BJ (cell line): ENCODE measurements at regions of chr11 and their contacts with region 1.

Region 1: DNA sequence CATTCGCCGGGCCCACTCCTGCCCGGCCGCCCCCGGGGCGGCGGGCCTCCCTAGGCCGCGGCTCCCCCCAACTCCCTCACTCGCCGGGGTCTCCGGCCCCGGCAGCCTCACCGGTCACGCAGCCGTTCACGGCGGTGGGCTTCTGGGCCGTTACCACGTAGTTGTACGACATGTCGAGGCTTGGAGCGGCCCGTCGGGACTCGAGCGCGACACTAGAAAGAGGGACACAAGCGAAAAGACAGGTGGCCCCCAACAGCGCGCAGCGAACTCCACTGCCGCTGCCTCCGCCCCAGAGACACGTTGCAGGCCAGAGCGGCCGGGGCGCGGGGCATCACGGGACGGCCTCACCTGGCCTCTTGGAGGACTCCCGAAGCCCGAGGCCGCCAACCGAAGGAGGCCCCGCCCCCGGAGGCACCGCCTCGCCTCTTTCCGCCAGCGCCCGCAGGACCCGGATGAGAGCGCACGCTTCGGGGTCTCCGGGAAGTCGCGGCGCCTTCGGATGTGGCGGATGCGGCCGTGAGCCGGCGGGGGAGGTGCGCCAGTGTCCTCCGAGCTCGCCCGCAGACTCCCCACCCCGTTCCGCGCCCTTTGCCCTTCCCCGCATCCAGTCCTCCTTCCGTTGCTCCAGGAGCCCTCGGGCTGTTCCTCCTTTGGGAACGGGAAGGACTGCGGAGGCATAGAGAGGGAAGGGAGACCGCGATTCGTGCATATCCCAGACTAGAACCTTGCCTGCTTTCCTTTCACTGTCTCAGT is at the starts of genes DDB1 and TKFC:
- DNase-seq: peak; percentile 53
- H3K4me3 ChIP-seq: peak within 1 kb of the TSS; percentile 95
- H3K27me3 ChIP-seq: no peaks in the 10 kb centered on the region
- CTCF ChIP-seq: no peak
- polyA plus RNA-seq, gene DDB1: 265 and 281 TPM in 2 replicates
- polyA plus RNA-seq, gene TKFC: 23.9 and 37.6 TPM in 2 replicates

Region 2: DNA sequence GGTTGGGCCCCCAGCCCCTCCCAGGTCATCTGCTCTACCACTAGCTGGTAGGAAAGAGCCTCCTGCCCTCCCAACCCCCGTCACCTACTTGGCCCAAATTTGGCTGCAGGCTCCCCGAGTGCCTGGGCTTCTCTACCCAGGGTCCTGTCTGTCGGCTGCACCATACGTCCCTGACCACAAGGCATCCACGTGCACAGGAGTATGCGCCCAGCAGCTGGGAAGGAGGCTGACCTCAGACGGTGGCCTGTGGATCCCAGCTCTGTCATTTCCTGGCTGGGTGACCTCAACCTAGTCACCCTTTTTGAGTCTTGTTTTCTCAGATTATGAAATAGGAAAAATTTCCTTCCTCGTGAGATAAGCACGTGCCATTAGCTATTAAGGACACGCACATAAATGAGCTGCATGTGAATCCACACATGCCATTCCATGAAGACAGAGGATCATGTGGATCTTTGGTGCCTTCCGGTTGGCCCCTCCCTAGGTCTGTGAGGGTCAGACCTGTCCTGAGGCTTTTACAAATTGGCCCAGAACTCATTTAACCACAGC is 15.0 kb after region 1 on chr11:
- CTCF ChIA-PET with region 1: interaction called, 56 read pairs
- POLR2A ChIA-PET with region 1: no interaction called
- DNase-seq: no peak
- H3K4me3 ChIP-seq: no peak overlapping the region
- H3K27me3 ChIP-seq: no peaks in the 10 kb centered on the region
- CTCF ChIP-seq: no peak

Region 3: GRCh38 chr11:61361686-61362541 is 28.9 kb after region 1 on chr11 and contains the starts of genes CYB561A3 and TMEM138:
- CTCF ChIA-PET with region 1: interaction called, 60 read pairs
- POLR2A ChIA-PET with region 1: no interaction called
- DNase-seq: peak; percentile 73
- H3K4me3 ChIP-seq: peak within 1 kb of the TSS; percentile 77
- H3K27me3 ChIP-seq: no peaks in the 10 kb centered on the region
- CTCF ChIP-seq: no peak
- polyA plus RNA-seq, gene CYB561A3: 32.9 and 91.3 TPM in 2 replicates
- polyA plus RNA-seq, gene TMEM138: 55.6 and 73.9 TPM in 2 replicates

Region 4: DNA sequence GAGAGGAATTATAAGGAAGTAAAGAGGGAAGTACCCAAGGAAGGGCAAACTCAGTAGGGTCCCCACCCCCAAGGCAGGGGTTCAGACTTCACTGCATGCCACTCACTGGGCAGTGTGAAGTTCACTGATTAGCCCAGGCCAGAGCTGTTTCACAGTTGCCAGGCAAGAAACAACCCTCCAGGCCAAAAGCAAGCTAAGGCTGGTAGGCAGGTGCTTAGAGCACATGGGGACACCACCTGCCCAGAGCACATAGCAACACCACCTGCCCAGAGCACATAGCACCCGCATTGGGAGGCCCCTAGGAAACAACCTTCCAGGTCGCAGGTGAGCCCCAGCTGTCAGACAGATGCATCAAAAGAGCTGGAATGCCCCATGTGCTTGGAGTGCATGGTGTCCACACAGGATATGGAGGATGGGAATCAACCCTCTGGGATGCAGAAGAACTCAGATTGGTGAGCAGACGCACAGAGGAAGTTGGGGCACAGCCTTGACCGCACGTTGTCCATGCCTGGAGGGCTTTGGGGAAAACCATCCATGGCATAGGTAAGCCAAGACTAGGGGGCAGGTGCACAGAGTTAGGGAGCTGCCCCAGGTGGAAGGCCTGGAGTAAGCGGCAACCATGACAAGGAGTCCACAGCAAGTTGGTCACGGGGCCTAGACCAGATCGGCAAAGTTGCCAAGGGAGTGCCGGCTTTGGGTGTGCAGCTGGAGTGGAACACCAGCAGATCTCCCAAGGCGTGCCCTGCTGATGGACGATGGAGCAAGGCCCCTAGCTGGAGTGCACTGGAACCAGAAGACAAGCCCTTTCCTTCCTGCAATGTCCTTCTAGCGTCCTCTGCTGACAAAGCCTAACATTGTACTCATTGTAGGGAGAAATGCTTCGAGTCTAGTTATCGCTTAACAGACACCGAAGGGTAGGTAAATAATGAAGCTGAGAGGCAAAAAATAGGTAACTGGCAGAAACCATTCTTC is 51.6 kb after region 1 on chr11:
- CTCF ChIA-PET with region 1: interaction called, 374 read pairs
- POLR2A ChIA-PET with region 1: no interaction called
- DNase-seq: no peak
- H3K4me3 ChIP-seq: no peak overlapping the region
- H3K27me3 ChIP-seq: no peaks in the 10 kb centered on the region
- CTCF ChIP-seq: peak; percentile 25; the same call in 1 of the 2 replicates

Region 5: GRCh38 chr11:61403658-61404057 is 70.7 kb after region 1 on chr11:
- CTCF ChIA-PET with region 1: interaction called, 10 read pairs
- POLR2A ChIA-PET with region 1: no interaction called
- DNase-seq: no peak
- H3K4me3 ChIP-seq: no peak overlapping the region
- H3K27me3 ChIP-seq: no peaks in the 10 kb centered on the region
- CTCF ChIP-seq: no peak